Heart right ventricle (tissue), 16 donors: ENCODE measurements at regions of chr6 and their contacts with region 1.

Region 1: DNA sequence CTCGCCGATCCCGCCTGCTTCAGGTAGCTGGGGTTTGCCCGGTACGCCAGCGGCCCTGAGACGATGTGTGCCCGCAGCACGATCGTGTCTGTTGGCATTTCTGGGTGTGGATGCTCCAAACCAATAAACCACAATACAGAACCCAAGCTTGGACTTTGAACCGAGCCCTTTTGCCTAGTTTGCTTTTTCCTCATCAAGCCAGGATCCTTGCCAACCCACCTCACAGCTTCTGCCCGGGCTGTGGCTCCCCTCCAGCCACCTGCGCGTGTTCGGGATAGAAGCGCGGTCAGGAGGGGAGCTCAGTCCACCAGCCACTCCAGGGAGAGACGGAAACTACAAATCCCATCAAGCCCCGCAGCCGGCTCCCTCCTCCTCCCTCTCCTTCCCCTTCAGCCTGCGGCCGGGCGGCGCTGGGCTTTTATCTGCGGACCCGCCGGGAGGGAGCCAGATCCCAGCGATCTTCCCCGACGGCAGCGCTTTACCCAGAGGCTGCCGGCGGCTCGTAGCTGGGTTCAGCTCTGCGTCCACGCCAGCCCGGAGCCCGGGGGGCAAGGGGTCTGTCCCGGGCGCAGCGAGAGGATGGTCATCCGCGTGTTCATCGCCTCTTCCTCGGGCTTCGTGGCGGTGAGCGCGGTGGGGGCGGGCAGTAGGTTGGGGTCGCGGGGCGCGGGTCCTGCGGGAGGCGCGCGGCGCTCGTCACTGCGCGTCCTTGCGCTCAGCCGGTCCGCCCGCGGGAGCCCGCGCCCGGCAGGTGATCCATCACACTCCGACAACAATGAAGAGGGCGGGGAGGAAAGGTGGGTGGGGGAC is at the start of gene SH3BGRL2:
- DNase-seq: peak; percentile 71 to 77
- ATAC-seq: peak; percentile 94 to 97 (median 96)
- H3K4me3 ChIP-seq: peak within 1 kb of the TSS; percentile 55 to 88 (median 76)
- H3K27ac ChIP-seq: peak within 1 kb of the TSS; percentile 3 to 86 (median 74)
- H3K4me1 ChIP-seq: peaks cover 0 to 37% (median 7%) of the 10 kb centered on the region in 9 donors
- H3K27me3 ChIP-seq: peaks cover 0 to 37% (median 0%) of the 10 kb centered on the region in 7 donors
- CTCF ChIP-seq: no peak
- total RNA-seq, gene SH3BGRL2: 4.1 to 8.6 (median 5.0) TPM

Region 2: GRCh38 chr6:79672631-79673111 is 41.6 kb after region 1 on chr6:
- intact Hi-C with region 1: loop called in 1 of 10 experiments (anchors 5 kb)
- DNase-seq: no peak
- ATAC-seq: peak in 3 of 8 donors; percentile 23 to 44 (median 42)
- H3K4me3 ChIP-seq: no peak overlapping the region
- H3K27ac ChIP-seq: peak overlapping the region in 2 of 10 donors; percentile 50 to 61
- H3K4me1 ChIP-seq: peaks cover 0 to 33% (median 17%) of the 10 kb centered on the region in 9 donors
- H3K27me3 ChIP-seq: no peaks in the 10 kb centered on the region
- CTCF ChIP-seq: peak; percentile 16 to 61 (median 45)

Region 3: DNA sequence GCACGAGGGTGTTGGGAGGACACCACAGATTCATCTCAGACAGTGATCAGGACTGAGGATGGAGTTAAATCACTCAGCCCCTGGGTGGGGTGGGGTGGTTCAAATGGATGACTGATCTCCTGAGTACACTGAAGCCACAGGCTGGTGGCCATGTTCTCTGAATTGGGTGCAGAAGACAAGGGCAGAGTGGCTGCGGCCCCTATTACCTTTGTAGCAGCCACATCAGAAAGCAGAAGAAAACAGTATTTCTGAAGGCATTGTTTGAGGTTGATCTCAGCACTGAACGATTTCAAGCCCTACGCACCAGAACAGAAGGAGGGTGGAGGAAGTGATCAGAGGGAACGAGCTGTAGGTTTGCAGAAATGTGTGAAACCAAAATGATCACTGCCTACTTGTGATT is 71.6 kb after region 1 on chr6:
- intact Hi-C with region 1: loop called in 1 of 10 experiments (anchors 10 kb)
- DNase-seq: no peak
- ATAC-seq: no peak
- H3K4me3 ChIP-seq: no peak overlapping the region
- H3K27ac ChIP-seq: no peak overlapping the region
- H3K4me1 ChIP-seq: peaks cover 0 to 6% (median 0%) of the 10 kb centered on the region in 9 donors
- H3K27me3 ChIP-seq: no peaks in the 10 kb centered on the region
- CTCF ChIP-seq: no peak